ENCODE measurements at regions of chr9 and their contacts with region 1.

Region 1: GRCh38 chr9:74858751-74859414 is 28.8 kb downstream of the TRPM6 start:
- DNase-seq: no peak
- H3K4me3 ChIP-seq: no peak overlapping the region
- H3K27ac ChIP-seq: no peak overlapping the region
- H3K4me1 ChIP-seq: peaks cover 12% of the 10 kb centered on the region
- H3K27me3 ChIP-seq: no peaks in the 10 kb centered on the region
- CTCF ChIP-seq: no peak

Region 2: GRCh38 chr9:74391816-74392215 is 467.1 kb before region 1 on chr9:
- intact Hi-C with region 1: no loop called
- DNase-seq: no peak
- H3K4me3 ChIP-seq: no peak overlapping the region
- H3K27ac ChIP-seq: no peak overlapping the region
- H3K4me1 ChIP-seq: no peaks in the 10 kb centered on the region
- H3K27me3 ChIP-seq: no peaks in the 10 kb centered on the region
- CTCF ChIP-seq: no peak

Region 3: GRCh38 chr9:74910036-74910435 is 51.2 kb after region 1 on chr9:
- intact Hi-C with region 1: loop called (anchors 10 kb)
- DNase-seq: no peak
- H3K4me3 ChIP-seq: no peak overlapping the region
- H3K27ac ChIP-seq: no peak overlapping the region
- H3K4me1 ChIP-seq: no peaks in the 10 kb centered on the region
- H3K27me3 ChIP-seq: peaks cover 8% of the 10 kb centered on the region
- CTCF ChIP-seq: no peak

Region 4: DNA sequence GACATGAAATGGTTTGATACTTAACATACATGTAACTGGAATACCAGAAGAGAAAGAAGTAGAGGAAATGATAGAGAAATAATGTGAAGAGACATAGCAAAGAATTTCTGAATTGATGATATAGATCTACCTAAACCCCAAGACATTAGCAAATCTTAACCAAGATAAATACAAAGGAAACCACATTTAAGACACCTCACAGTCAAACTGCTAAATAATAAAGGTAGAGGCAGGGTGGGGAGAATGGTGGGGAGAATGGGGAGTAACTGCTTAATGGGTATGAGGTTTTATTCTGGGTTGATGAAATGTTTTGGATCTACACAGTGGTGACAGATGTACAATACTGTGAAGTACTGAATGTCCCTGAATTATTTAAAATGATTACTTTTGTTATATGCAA is 151.7 kb after region 1 on chr9:
- intact Hi-C with region 1: no loop called
- DNase-seq: no peak
- H3K4me3 ChIP-seq: no peak overlapping the region
- H3K27ac ChIP-seq: no peak overlapping the region
- H3K4me1 ChIP-seq: no peaks in the 10 kb centered on the region
- H3K27me3 ChIP-seq: no peaks in the 10 kb centered on the region
- CTCF ChIP-seq: no peak